Heart left ventricle (tissue), 16 donors: ENCODE measurements at regions of chr9 and their contacts with region 1.

Region 1: GRCh38 chr9:83304686-83305085 is 233.5 kb downstream of the FRMD3 start:
- DNase-seq: peak; percentile 89 to 93 (median 92)
- ATAC-seq: peak; percentile 85 to 96 (median 93)
- H3K4me3 ChIP-seq: no peak overlapping the region
- H3K27ac ChIP-seq: peak overlapping the region; percentile 0 to 76 (median 52)
- H3K4me1 ChIP-seq: peaks cover 0 to 46% (median 39%) of the 10 kb centered on the region in 12 donors
- H3K27me3 ChIP-seq: no peaks in the 10 kb centered on the region
- CTCF ChIP-seq: no peak
- POLR2A ChIP-seq: no peak

Region 2: DNA sequence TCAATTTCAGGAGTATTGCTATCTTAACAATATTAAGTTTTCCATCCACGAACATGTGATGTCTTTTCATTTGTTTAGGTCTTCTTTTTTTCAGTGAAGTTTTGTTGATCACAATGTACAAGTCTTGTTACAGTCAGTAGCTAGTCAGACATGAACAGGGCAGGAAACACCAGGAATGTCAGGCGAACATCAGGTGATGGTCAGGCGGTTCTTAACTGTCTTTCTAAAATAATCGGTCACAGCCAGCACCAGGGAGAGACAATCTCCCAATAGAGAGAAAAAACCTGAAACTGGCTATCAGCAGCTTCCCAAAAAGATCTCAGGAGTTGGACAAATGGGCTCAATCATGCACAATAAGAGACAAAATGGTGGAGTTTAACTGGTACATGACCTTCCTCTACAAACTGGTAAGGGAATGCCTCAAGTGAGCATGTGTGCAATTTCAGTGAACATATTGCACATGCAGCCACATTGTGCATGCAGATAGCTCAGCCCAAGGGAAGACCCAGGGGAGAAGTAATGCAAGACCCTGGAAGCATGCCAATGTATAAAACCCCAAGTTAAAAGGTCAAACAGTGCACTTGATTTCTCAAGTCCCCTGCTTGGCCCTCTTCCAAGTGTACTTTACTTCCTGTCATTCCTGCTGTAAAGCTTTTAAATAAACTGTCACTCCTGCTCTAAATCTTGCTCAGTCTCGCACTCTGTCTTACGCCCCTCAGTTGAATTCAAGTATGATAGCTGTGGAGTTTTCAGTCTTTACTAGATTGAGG is 65.6 kb before region 1 on chr9:
- intact Hi-C with region 1: loop called in 2 of 10 experiments (anchors 10 kb)
- DNase-seq: peak in 1 of 5 donors; percentile 33
- ATAC-seq: peak in 2 of 4 donors; percentile 35 to 59
- H3K4me3 ChIP-seq: no peak overlapping the region
- H3K27ac ChIP-seq: peak overlapping the region in 6 of 12 donors; percentile 0 to 54 (median 12)
- H3K4me1 ChIP-seq: peaks cover 0 to 45% (median 18%) of the 10 kb centered on the region in 12 donors
- H3K27me3 ChIP-seq: no peaks in the 10 kb centered on the region
- CTCF ChIP-seq: no peak
- POLR2A ChIP-seq: no peak

Region 3: GRCh38 chr9:83247732-83248131 is 57.0 kb before region 1 on chr9:
- intact Hi-C with region 1: loop called in 1 of 10 experiments (anchors 10 kb)
- DNase-seq: no peak
- ATAC-seq: no peak
- H3K4me3 ChIP-seq: no peak overlapping the region
- H3K27ac ChIP-seq: no peak overlapping the region
- H3K4me1 ChIP-seq: peaks cover 0 to 25% (median 6%) of the 10 kb centered on the region in 12 donors
- H3K27me3 ChIP-seq: no peaks in the 10 kb centered on the region
- CTCF ChIP-seq: no peak
- POLR2A ChIP-seq: no peak

Region 4: DNA sequence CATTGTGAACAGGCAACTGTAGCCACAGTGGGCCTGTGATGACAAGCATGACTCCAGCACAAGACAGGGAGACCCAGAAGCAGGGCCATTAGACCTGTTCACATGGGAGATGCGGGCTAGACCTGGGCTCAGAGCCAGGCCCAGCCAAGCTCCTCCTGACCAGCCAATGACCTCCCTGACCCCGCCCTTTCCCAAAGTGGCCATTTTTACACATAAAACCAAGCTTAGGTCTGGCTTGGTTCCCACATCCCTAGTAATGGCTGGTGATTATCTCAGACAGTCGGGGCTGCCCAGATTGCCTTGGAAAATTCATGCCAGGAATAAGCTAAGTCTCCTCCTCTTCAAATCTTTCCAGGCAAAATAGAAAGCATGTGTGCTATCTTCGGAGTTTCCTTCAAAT is 139.4 kb after region 1 on chr9:
- intact Hi-C with region 1: no loop called
- DNase-seq: peak; percentile 57 to 82 (median 77)
- ATAC-seq: peak; percentile 40 to 77 (median 68)
- H3K4me3 ChIP-seq: no peak overlapping the region
- H3K27ac ChIP-seq: peak overlapping the region in 11 of 12 donors; percentile 9 to 68 (median 37)
- H3K4me1 ChIP-seq: peaks cover 0 to 58% (median 23%) of the 10 kb centered on the region in 12 donors
- H3K27me3 ChIP-seq: no peaks in the 10 kb centered on the region
- CTCF ChIP-seq: no peak
- POLR2A ChIP-seq: no peak